ENCODE measurements at regions of chr1 and their contacts with region 1.

Region 1: GRCh38 chr1:27616441-27616840 is 12.5 kb upstream of the AHDC1 start:
- DNase-seq: peak in 1 of 9 experiments; percentile 19
- ATAC-seq: no peak
- H3K4me3 ChIP-seq: no peak overlapping the region
- H3K4me3 Mint-ChIP-seq: no peak overlapping the region
- H3K27ac ChIP-seq: peak overlapping the region in 1 of 2 experiments; percentile 80
- H3K27ac Mint-ChIP-seq: peak overlapping the region; percentile 84
- H3K4me1 ChIP-seq: peaks cover 65% of the 10 kb centered on the region
- H3K4me1 Mint-ChIP-seq: peaks cover 65% of the 10 kb centered on the region
- H3K27me3 ChIP-seq: no peaks in the 10 kb centered on the region
- H3K27me3 Mint-ChIP-seq: no peaks in the 10 kb centered on the region
- CTCF ChIP-seq: no peak

Region 2: DNA sequence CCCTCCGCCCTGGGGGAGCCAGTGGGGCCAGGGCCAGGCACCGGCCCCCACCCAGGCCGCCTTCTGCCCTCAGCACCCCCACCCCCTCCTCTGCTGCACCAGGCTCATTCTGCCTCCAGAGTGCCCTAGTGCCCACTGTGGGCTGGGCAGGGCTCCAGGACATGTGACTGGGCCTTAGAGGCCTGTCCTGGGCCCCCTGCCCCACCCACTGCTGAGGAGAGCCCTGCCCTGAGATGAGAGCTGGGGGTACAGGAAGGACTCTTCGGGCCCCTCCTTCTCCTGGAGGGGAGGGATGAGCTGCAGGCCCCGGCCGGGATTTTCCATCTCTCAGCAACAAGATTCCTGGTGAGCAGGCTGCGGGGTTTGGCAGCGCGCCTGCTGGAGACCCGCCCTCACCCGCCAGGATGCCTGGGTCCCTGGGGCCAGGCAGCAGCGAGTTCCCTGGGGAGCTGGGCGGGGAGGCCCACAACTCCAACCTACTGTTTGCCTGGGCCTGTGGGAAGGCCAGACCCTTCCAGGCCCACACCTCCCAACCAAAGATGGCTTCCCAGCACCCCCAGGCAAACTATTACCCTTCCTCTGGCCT is 26.5 kb before region 1 on chr1:
- CTCF ChIA-PET with region 1: no interaction called
- POLR2A ChIA-PET with region 1: no interaction called
- intact Hi-C with region 1: no loop called
- DNase-seq: no peak
- ATAC-seq: no peak
- H3K4me3 ChIP-seq: no peak overlapping the region
- H3K4me3 Mint-ChIP-seq: no peak overlapping the region
- H3K27ac ChIP-seq: no peak overlapping the region
- H3K27ac Mint-ChIP-seq: no peak overlapping the region
- H3K4me1 ChIP-seq: peaks cover 5% of the 10 kb centered on the region
- H3K4me1 Mint-ChIP-seq: no peaks in the 10 kb centered on the region
- H3K27me3 ChIP-seq: no peaks in the 10 kb centered on the region
- H3K27me3 Mint-ChIP-seq: no peaks in the 10 kb centered on the region
- CTCF ChIP-seq: no peak

Region 3: GRCh38 chr1:27632387-27633297 is 16.2 kb after region 1 on chr1:
- CTCF ChIA-PET with region 1: interaction called, 5 read pairs
- POLR2A ChIA-PET with region 1: no interaction called
- intact Hi-C with region 1: loop called in 1 of 2 experiments (anchors 2 kb)
- DNase-seq: peak in 4 of 9 experiments; percentile 29 to 72 (median 42)
- ATAC-seq: peak; percentile 52
- H3K4me3 ChIP-seq: peak overlapping the region in 1 of 2 experiments; percentile 8
- H3K4me3 Mint-ChIP-seq: peak overlapping the region; percentile 75
- H3K27ac ChIP-seq: peak overlapping the region in 1 of 2 experiments; percentile 75
- H3K27ac Mint-ChIP-seq: peak overlapping the region; percentile 82
- H3K4me1 ChIP-seq: peaks cover 72% of the 10 kb centered on the region
- H3K4me1 Mint-ChIP-seq: peaks cover 68% of the 10 kb centered on the region
- H3K27me3 ChIP-seq: no peaks in the 10 kb centered on the region
- H3K27me3 Mint-ChIP-seq: no peaks in the 10 kb centered on the region
- CTCF ChIP-seq: no peak

Region 4: DNA sequence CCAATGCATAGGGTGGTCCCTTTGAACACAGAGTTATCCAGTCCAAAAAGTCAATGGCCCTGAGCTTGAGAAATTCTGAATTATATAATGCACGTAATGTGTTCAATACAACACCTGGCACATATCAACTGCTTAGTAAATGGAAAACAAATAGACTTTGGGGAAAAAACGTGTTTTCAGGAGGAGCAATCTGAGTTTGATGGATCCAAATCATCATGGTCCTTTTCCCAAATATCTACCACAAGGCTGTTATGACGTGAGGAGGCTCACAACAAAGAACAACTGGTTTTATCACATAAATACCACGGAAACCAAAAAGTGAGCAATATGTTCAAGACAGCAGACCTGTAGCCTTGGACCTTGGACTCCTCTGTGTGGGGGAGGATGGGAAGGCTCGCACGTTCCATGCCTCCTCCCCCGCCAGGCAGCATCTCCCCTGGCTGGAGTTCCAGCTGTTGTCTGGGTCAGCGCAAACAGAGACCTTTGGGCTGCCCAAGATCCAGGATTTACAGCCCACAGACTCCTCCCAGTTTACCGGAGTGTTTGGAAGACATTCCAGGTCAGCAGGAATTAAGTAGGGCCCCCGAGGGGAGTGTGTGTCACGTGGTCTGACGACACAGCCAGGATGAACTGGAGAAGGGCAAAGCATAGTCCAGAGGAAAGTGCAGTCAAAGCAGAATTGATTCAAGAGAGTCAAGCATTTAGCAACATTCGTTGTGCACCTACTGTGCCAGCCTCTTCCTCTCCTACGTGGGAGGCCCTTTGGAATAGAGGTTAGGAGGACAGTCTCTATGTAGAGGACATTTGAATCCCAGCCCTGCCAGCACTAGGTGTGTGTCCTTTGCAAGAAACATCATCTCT is 680.2 kb after region 1 on chr1:
- CTCF ChIA-PET with region 1: no interaction called
- POLR2A ChIA-PET with region 1: no interaction called
- intact Hi-C with region 1: no loop called
- DNase-seq: no peak
- ATAC-seq: no peak
- H3K4me3 ChIP-seq: no peak overlapping the region
- H3K4me3 Mint-ChIP-seq: no peak overlapping the region
- H3K27ac ChIP-seq: no peak overlapping the region
- H3K27ac Mint-ChIP-seq: no peak overlapping the region
- H3K4me1 ChIP-seq: no peaks in the 10 kb centered on the region
- H3K4me1 Mint-ChIP-seq: no peaks in the 10 kb centered on the region
- H3K27me3 ChIP-seq: no peaks in the 10 kb centered on the region
- H3K27me3 Mint-ChIP-seq: peaks cover 6% of the 10 kb centered on the region
- CTCF ChIP-seq: no peak

Measured in CD8-positive, alpha-beta T cell (primary cell).